Tibial artery (tissue), 4 donors: ENCODE measurements at regions of chr17 and their contacts with region 1.

Region 1: GRCh38 chr17:74748529-74749365 is at the start of gene NHERF1:
- DNase-seq: peak; percentile 95 to 97
- H3K4me3 ChIP-seq: peak within 1 kb of the TSS; percentile 95 to 98
- H3K27ac ChIP-seq: peak within 1 kb of the TSS; percentile 80 to 89
- H3K4me1 ChIP-seq: peaks cover 0 to 43% (median 36%) of the 10 kb centered on the region in 4 donors
- H3K27me3 ChIP-seq: no peaks in the 10 kb centered on the region
- CTCF ChIP-seq: no peak

Region 2: GRCh38 chr17:74386386-74386785 is 362.4 kb before region 1 on chr17:
- intact Hi-C with region 1: no loop called
- DNase-seq: peak in 1 of 2 donors; percentile 40
- H3K4me3 ChIP-seq: no peak overlapping the region
- H3K27ac ChIP-seq: no peak overlapping the region
- H3K4me1 ChIP-seq: peaks cover 0 to 7% (median 3%) of the 10 kb centered on the region in 4 donors
- H3K27me3 ChIP-seq: no peaks in the 10 kb centered on the region
- CTCF ChIP-seq: no peak

Region 3: GRCh38 chr17:74690409-74690825 is 58.3 kb before region 1 on chr17:
- intact Hi-C with region 1: no loop called
- DNase-seq: peak; percentile 62 to 72
- H3K4me3 ChIP-seq: no peak overlapping the region
- H3K27ac ChIP-seq: no peak overlapping the region
- H3K4me1 ChIP-seq: no peaks in the 10 kb centered on the region
- H3K27me3 ChIP-seq: peaks cover 0 to 15% of the 10 kb centered on the region in 2 donors
- CTCF ChIP-seq: no peak

Region 4: DNA sequence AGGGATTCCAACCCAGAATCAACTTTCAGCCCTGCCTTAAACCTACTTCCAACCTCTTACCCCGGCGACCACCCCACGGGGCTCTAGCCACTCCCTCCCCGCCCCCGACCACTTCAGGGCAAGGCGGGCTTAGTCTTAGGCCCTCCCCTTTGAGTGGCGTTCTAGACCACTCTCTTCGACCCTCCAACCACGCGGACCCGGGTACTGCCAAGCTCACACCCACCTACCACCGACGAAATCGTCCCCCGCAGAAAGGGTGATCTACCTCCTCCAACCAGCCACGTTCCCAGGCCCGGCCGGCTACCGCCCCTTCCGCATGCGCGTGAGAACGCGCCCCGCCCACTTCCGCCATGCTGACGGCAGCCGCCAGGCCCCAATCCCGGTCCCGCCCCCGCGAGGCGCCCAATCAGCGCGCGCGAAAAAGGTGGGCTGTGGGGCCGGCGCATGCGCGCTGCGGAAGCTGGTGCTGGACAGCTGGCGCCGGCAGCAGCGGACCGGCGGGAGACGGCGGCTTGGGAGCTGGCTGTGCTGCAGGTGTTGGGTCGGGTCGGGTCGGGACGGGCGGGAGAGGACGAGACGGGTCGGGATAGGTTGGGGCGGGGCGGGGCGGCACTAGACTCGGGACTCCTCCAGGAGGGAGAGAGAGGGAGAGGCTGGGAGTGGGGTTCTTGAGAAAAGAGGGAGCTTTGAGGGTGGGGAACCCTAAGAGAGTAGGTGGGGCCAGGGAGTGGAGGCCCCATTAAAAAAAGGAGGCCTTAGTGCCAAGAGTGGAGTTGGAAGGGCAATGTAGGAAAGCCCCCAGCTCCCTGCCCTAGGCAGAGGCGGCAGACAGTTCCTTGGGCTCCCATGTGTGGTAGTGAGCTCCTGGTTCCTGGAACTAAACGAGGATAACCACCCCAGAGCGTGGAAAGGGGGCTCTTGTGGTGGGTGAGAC is 27.6 kb after region 1 on chr17 and contains the start of gene NAT9:
- intact Hi-C with region 1: loop called (anchors 2 kb)
- DNase-seq: peak; percentile 97 to 98
- H3K4me3 ChIP-seq: peak within 1 kb of the TSS; percentile 74 to 78
- H3K27ac ChIP-seq: peak within 1 kb of the TSS; percentile 76 to 80
- H3K4me1 ChIP-seq: peaks cover 0 to 32% (median 23%) of the 10 kb centered on the region in 4 donors
- H3K27me3 ChIP-seq: no peaks in the 10 kb centered on the region
- CTCF ChIP-seq: peak in 1 of 2 experiments; percentile 32

Region 5: GRCh38 chr17:75417054-75417580 is 668.4 kb after region 1 on chr17:
- intact Hi-C with region 1: no loop called
- DNase-seq: no peak
- H3K4me3 ChIP-seq: no peak overlapping the region
- H3K27ac ChIP-seq: peak overlapping the region in 1 of 2 donors; percentile 17
- H3K4me1 ChIP-seq: peaks cover 0 to 4% (median 2%) of the 10 kb centered on the region in 4 donors
- H3K27me3 ChIP-seq: peaks cover 0 to 8% of the 10 kb centered on the region in 2 donors
- CTCF ChIP-seq: no peak